PC-9 (cell line): ENCODE measurements at regions of chr2 and their contacts with region 1.

Region 1: DNA sequence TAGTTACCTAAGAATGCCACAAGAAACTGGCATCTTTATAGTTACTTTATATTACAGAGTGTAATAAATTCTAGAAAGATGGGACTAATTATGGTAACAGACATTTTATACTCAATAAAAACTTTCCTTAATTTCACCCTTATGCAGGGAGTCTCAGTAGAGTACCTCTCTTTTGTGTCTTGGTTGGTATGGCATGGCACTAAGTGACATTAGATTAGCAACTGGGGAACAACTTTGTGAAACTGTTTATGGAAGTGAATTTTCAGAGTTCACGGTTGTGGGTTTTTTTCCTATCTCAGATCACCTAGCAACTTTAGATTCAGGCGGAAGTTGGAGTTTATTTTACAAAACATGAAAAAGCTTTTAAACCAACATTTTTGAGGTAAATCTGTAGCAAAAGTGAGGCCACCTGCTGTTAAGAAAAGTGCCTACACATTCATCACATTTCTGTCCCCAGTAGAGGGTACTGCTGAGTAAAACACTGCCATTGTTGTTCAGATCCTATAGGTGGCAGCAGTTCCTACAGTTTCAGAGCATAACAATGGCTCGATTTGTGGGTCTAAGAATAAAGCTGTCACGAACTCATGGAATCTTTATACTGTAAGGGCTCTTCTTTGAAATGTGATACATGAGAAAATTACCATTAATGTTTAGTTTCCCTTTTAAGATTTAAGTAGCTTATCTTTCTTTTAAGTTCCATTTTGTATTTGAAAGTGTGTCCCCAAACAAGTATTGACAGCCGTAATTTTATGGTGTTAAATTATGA is 117.6 kb downstream of the CAMKMT start:
- DNase-seq: peak; percentile 51 to 83
- H3K4me3 ChIP-seq: no peak overlapping the region
- H3K27ac ChIP-seq: no peak overlapping the region
- H3K4me1 ChIP-seq: peaks cover 9% of the 10 kb centered on the region
- H3K27me3 ChIP-seq: no peaks in the 10 kb centered on the region
- CTCF ChIP-seq: peak; percentile 100

Region 2: DNA sequence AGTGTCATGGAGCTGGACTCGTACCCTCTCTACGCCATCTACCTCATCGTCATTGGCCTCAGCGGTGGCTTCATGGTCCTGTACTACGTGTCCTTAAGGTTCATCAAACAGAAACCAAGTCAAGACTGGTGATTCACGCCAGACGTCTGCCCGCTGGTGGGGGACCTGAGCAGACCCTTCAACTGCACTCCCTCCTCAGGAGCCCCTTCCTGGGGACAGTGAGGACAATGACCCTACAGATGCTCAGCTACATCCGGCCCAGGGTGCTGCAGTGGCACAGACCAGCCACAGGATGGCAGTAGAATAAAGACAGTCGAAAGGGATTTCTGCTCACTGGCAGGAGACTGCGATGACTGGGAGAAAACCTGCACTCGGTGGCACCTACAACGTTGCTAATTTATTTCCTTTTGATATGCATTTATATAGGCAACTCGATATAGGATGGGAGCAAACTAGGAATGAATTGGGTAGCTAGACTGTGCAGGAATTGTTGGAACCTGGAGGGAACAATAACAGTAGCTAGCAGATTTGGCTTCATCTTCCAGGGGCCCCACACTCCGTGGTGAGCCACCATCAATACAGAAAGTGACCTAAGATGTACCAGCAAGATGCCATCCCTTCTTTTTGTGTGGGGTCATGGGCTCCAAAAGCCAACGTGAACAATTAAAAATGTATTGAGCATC is 601.4 kb before region 1 on chr2:
- CTCF ChIA-PET with region 1: no interaction called
- POLR2A ChIA-PET with region 1: no interaction called
- intact Hi-C with region 1: loop called (anchors 5 kb)
- DNase-seq: peak; percentile 64 to 71
- H3K4me3 ChIP-seq: no peak overlapping the region
- H3K27ac ChIP-seq: no peak overlapping the region
- H3K4me1 ChIP-seq: peaks cover 16% of the 10 kb centered on the region
- H3K27me3 ChIP-seq: peaks cover 42% of the 10 kb centered on the region
- CTCF ChIP-seq: peak; percentile 99

Region 3: DNA sequence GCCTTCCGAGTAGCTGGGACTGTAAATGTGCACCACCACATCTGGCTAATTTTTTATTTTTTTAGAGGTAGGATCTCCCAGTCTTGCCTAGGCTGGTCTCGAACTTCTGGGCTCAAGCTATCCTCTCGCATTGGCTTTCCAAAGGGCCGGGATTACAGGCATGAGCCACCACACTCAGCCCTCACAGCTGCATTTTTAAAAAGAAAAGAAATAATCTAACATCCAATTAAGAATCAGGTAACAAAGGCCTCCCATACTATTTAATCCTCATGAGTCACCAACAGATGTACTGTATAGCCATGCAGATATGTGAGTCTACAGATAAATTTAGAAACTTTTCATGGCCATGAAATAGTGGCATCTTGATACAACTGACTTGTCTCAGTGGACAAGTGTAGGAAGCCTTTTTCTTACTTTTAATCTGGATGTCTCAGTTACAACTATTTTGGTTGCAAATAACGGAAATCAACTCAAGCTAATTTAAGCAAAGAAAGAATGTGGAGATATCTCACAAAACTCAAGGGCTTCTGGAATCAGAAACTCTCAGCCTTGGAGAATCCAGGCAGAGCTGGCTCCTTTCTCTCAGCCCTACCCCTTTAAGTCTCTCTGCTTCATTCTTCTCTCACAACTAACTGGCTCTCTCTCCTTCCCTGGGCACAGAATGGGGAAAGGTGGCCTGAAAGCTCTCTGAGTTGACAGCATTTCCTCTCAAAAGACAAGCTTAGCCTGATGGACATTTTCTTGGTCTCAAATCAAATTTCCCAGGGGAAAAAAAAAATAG is 323.4 kb before region 1 on chr2:
- CTCF ChIA-PET with region 1: no interaction called
- POLR2A ChIA-PET with region 1: no interaction called
- intact Hi-C with region 1: no loop called
- DNase-seq: peak in 1 of 2 experiments; percentile 50
- H3K4me3 ChIP-seq: no peak overlapping the region
- H3K27ac ChIP-seq: no peak overlapping the region
- H3K4me1 ChIP-seq: no peaks in the 10 kb centered on the region
- H3K27me3 ChIP-seq: no peaks in the 10 kb centered on the region
- CTCF ChIP-seq: no peak

Region 4: GRCh38 chr2:44392338-44392943 is 86.9 kb before region 1 on chr2:
- CTCF ChIA-PET with region 1: interaction called, 28 read pairs
- POLR2A ChIA-PET with region 1: no interaction called
- intact Hi-C with region 1: loop called (anchors 1 kb)
- DNase-seq: peak in 1 of 2 experiments; percentile 46
- H3K4me3 ChIP-seq: no peak overlapping the region
- H3K27ac ChIP-seq: no peak overlapping the region
- H3K4me1 ChIP-seq: no peaks in the 10 kb centered on the region
- H3K27me3 ChIP-seq: no peaks in the 10 kb centered on the region
- CTCF ChIP-seq: peak; percentile 94

Region 5: GRCh38 chr2:44490726-44491125 is 11.4 kb after region 1 on chr2:
- CTCF ChIA-PET with region 1: interaction called, 19 read pairs
- POLR2A ChIA-PET with region 1: no interaction called
- intact Hi-C with region 1: no loop called
- DNase-seq: peak in 1 of 2 experiments; percentile 75
- H3K4me3 ChIP-seq: no peak overlapping the region
- H3K27ac ChIP-seq: peak overlapping the region; percentile 9; the same call in 1 of the 2 replicates
- H3K4me1 ChIP-seq: peaks cover 37% of the 10 kb centered on the region
- H3K27me3 ChIP-seq: no peaks in the 10 kb centered on the region
- CTCF ChIP-seq: no peak

Region 6: GRCh38 chr2:44560352-44560751 is 81.0 kb after region 1 on chr2:
- CTCF ChIA-PET with region 1: interaction called, 12 read pairs
- POLR2A ChIA-PET with region 1: no interaction called
- intact Hi-C with region 1: no loop called
- DNase-seq: peak; percentile 26 to 37
- H3K4me3 ChIP-seq: no peak overlapping the region
- H3K27ac ChIP-seq: peak overlapping the region; percentile 72
- H3K4me1 ChIP-seq: peaks cover 29% of the 10 kb centered on the region
- H3K27me3 ChIP-seq: no peaks in the 10 kb centered on the region
- CTCF ChIP-seq: peak; percentile 57

Region 7: DNA sequence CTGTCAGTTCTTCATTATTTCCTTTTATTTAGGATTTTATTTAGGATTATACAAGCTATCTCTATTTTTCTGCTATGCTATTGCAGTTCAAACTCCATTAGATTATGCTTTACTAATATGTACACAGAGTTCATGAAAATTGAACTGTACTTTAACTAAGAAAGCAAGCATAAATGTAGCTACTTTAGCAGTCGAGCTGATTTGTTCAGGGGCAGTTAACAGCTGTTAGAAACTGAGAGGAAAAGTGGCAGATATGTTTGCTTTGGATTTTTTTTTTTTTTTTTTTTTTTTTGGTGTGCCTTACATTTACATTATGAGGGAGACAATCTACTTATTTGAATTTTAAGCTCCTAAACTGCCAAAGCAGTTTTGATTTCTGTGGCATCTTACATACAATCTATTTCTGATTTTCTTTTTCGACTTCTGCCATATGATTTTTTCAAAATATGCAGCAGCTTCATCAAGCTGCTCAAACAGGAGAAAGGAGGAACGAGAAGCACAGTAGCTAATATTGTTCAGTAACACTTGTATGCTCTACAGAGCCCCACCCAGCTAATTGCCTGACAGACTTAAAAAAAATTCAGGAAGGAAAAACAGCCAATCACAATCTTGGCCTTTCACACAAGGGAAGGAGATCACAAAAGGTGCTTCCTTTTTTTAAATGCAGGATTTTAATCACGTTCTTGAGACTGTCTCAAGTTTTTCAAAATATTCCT is 228.8 kb after region 1 on chr2:
- CTCF ChIA-PET with region 1: interaction called, 28 read pairs
- POLR2A ChIA-PET with region 1: interaction called, 4 read pairs
- intact Hi-C with region 1: no loop called
- DNase-seq: peak; percentile 38 to 66
- H3K4me3 ChIP-seq: peak overlapping the region; percentile 25; the same call in 1 of the 2 replicates
- H3K27ac ChIP-seq: peak overlapping the region; percentile 32
- H3K4me1 ChIP-seq: peaks cover 18% of the 10 kb centered on the region
- H3K27me3 ChIP-seq: no peaks in the 10 kb centered on the region
- CTCF ChIP-seq: no peak

Region 8: DNA sequence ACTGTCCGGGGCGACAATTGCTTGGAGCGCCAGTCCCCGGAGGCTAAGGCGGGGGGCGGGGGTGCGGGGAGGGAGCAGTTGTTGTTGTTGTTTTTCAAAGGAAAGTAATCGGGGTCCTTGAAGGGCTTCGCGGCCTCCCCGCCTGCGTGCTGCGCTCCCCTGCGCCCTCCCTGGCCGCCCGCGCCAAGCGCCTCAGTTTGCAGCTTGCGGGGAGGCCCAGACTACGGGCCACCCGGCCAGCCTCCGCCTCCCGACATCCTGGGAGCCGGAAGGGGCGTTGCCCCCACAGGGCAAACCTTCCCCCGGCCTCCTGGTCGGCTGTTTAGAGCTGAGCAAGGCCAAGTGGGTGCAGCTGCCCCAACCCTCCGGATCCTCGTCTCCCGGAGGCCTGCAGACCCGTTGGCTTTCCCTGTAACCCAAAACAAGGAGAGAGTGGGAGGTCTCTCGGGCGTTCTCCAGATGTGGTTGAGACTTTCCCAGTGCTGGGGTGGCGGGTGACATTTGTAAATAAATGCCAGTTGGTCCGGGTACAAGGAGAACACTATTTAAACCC is 458.5 kb after region 1 on chr2:
- CTCF ChIA-PET with region 1: interaction called, 4 read pairs
- POLR2A ChIA-PET with region 1: no interaction called
- intact Hi-C with region 1: loop called (anchors 1 kb)
- DNase-seq: peak; percentile 86 to 91
- H3K4me3 ChIP-seq: peak overlapping the region; percentile 88
- H3K27ac ChIP-seq: peak overlapping the region; percentile 77
- H3K4me1 ChIP-seq: peaks cover 25% of the 10 kb centered on the region
- H3K27me3 ChIP-seq: no peaks in the 10 kb centered on the region
- CTCF ChIP-seq: no peak; the same call in 1 of the 2 replicates

Region 9: GRCh38 chr2:45637440-45637839 is 1158.1 kb after region 1 on chr2:
- CTCF ChIA-PET with region 1: no interaction called
- POLR2A ChIA-PET with region 1: no interaction called
- intact Hi-C with region 1: no loop called
- DNase-seq: no peak
- H3K4me3 ChIP-seq: no peak overlapping the region
- H3K27ac ChIP-seq: no peak overlapping the region
- H3K4me1 ChIP-seq: no peaks in the 10 kb centered on the region
- H3K27me3 ChIP-seq: no peaks in the 10 kb centered on the region
- CTCF ChIP-seq: no peak